ENCODE measurements at regions of chr2 and their contacts with region 1.

Region 1: DNA sequence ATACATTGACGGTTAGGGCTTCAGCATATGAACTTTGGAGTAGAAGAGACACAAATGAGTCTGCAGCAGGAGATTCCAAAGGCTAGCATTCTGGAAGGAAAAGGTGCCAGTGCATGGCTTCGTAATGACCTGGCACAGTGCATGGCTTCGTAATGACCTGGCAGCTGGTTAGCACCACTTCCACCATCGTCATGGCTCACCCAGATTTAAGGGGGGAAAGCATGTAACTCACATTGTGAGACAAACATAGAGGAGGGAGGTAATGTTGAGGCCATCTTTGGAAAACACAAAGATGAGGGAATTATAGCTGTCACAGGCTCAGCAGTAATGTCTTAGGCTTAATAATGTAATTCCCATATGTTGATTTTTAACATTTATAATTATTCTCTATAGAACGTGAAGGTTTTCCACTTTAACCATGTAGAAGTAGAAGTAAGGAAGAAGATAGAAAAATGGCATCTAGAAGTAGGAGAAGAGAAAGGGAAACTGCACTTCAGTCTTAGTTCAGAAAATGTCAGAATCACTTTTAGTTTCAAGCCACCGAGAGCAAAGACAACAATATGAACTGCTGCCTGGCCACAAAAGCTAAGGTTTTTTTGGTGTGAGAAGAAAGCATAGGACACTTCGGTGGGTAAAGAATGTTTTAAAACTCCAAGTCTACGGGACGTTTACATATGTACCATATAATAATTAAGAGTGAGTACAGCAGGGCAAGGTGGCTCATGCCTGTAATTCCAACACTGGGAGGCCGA is 6.8 kb upstream of the STK25 start:
- DNase-seq: no peak
- ATAC-seq: no peak

Region 2: DNA sequence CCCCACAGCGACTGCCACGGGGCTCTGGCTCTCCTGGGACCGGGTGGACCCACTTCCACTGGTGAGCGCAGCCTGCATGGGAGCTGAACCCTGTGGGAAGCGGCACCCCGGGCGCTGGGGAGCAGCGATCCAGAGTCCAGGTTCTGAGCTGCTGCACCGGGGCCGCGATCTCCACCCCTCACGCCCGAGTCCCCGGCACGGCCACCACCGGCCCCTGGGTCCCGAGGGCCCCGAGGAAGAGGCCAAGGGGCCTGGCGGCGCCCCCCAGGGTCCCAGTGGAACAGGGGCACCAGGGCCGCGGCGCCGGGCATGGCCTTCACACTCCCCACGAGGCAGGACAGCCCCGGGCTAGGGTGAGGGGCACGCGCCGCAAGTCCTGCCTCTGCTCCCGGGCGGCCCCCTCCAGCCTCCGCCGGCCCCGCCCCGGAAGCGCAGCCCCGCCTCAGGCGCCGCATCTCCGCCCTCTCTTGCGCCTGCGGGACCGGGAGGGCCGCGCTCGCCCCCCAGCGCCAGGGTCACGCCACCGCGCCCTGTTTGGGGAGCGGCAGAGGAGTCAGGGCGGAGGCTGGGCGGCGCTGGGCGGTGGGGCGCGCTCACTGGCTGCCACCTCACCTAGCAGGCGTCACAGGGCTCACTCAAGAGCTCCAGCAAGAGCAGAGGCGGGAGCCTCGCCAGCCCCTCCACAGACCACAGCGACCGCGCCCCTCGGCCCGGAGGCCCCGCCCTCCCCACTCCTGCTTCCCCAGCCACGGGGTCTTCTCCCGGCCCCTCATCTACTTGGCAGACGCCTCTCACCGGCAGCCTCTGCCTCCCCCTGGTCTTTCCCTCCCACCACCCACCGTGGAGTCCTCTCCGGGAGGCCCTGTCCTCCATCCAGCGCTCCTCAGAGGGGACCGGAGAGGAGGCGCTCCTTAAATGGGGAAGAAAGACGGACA is 95.0 kb after region 1 on chr2:
- intact Hi-C with region 1: loop called in 1 of 2 experiments (anchors 10 kb)
- DNase-seq: peak; percentile 88
- ATAC-seq: peak; percentile 95 to 96

Measured in left cardiac atrium (tissue), 4 donors.